ENCODE measurements at regions of chr20 and their contacts with region 1.

Region 1: GRCh38 chr20:7935027-7935551 is 5.2 kb downstream of the HAO1 start:
- DNase-seq: no peak
- H3K4me3 ChIP-seq: no peak overlapping the region
- H3K27ac ChIP-seq: no peak overlapping the region
- H3K4me1 ChIP-seq: peaks cover 0 to 8% (median 3%) of the 10 kb centered on the region in 4 donors
- H3K27me3 ChIP-seq: no peaks in the 10 kb centered on the region
- CTCF ChIP-seq: no peak
- EP300 ChIP-seq: no peak
- POLR2A ChIP-seq: no peak

Region 2: DNA sequence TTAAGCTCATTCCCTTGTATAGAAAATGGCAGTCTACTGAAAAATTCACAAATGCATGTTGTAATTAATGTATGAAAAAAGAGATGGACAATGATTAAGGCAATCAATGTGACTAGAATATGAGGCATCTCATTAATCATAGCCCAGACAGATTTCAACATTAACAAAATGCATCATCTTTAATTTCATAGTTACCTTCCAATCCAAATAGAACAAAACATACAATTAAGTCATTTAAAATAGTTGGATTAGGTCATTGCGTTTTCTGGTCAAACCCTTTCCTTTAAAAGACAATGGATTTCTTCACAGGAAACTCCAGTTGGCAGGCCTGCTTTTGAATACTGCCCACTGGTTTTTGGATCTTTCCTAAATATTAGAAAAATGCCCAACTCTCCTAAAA is 198.8 kb before region 1 on chr20:
- intact Hi-C with region 1: no loop called
- DNase-seq: no peak
- H3K4me3 ChIP-seq: no peak overlapping the region
- H3K27ac ChIP-seq: no peak overlapping the region
- H3K4me1 ChIP-seq: no peaks in the 10 kb centered on the region
- H3K27me3 ChIP-seq: no peaks in the 10 kb centered on the region
- CTCF ChIP-seq: no peak
- EP300 ChIP-seq: no peak
- POLR2A ChIP-seq: no peak

Region 3: DNA sequence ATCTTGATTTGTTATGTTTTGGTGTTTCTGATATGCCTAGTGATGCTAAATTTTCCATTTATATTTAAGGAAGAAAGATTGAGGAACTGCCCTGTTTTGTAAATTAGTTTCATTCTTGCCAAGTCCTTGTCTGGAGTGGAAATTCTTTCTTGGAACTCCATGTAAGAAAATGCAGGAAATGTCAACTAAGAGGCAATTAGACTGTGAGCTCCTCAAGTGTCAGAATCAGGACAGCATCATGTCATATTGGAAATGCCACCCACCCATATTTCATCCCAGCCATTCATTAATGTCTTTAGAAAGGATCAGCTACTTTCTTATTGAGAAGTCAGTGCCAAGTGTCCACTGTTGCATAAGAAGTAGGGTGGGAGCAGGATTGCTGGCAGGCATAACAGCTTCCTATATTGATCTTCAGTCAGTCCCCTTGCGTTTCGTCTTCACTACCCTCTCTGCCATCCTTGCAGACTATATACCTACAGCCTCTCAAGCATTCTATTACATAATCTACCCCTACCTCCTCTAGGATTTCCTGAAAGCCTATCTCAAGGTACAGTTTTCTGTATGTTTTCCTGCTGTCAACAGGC is 37.2 kb before region 1 on chr20:
- intact Hi-C with region 1: no loop called
- DNase-seq: no peak
- H3K4me3 ChIP-seq: no peak overlapping the region
- H3K27ac ChIP-seq: no peak overlapping the region
- H3K4me1 ChIP-seq: no peaks in the 10 kb centered on the region
- H3K27me3 ChIP-seq: no peaks in the 10 kb centered on the region
- CTCF ChIP-seq: no peak
- EP300 ChIP-seq: no peak
- POLR2A ChIP-seq: no peak

Region 4: GRCh38 chr20:7980332-7981046 is 45.4 kb after region 1 on chr20:
- intact Hi-C with region 1: loop called (anchors 5 kb)
- DNase-seq: no peak
- H3K4me3 ChIP-seq: no peak overlapping the region
- H3K27ac ChIP-seq: no peak overlapping the region
- H3K4me1 ChIP-seq: no peaks in the 10 kb centered on the region
- H3K27me3 ChIP-seq: no peaks in the 10 kb centered on the region
- CTCF ChIP-seq: peak; percentile 11 to 61 (median 28)
- EP300 ChIP-seq: no peak
- POLR2A ChIP-seq: no peak

Region 5: DNA sequence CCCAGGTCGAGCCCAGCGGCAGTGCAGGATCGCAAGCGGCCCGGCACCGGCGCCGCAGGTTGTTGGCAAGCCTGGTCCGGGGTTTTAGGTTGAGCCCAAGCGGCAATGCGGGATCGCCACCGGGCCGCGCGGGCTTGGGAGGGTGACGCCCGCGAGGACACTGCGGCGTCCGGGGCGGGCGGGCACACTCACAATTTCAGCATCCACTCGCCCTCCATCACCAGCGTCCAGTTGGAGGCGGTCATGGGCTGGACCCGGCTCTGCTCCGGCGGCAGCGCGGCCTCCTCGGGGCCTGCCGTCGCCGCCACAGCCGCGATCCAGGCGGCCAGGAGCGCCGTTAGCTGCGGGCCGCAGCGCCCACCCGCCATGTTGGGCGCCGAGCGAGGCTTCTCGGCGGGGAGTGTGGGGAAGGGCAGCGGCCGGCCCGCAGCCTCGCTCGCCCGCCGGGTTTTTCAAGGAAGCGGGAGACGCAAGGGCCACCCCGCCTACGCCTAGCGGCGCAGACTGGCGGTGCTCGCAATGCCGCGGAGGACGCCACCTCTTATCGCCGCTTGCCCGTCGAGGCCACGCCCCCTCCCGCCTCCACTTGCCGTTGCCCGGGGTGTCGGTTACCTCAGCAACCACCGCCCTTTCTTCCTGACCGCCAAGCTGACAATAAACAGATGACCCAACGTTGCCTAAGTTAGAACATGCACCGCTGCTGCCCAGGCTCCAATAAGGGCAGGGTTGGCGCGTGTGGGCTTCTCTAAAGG is 84.3 kb after region 1 on chr20 and contains the start of gene TMX4:
- intact Hi-C with region 1: loop called (anchors 10 kb)
- DNase-seq: peak; percentile 99
- H3K4me3 ChIP-seq: peak within 1 kb of the TSS; percentile 64 to 97 (median 80)
- H3K27ac ChIP-seq: peak within 1 kb of the TSS; percentile 95 to 100 (median 99)
- H3K4me1 ChIP-seq: peaks cover 0 to 45% (median 37%) of the 10 kb centered on the region in 4 donors
- H3K27me3 ChIP-seq: no peaks in the 10 kb centered on the region
- CTCF ChIP-seq: peak; percentile 17 to 59 (median 46)
- EP300 ChIP-seq: peak in 2 of 4 donors; percentile 27 to 76
- POLR2A ChIP-seq: peak; percentile 84 to 89
- total RNA-seq, gene TMX4: 63.4 to 93.8 (median 76.4) TPM

Measured in sigmoid colon (tissue), 7 donors.